Body of pancreas (tissue), 4 donors: ENCODE measurements at regions of chr17 and their contacts with region 1.

Region 1: DNA sequence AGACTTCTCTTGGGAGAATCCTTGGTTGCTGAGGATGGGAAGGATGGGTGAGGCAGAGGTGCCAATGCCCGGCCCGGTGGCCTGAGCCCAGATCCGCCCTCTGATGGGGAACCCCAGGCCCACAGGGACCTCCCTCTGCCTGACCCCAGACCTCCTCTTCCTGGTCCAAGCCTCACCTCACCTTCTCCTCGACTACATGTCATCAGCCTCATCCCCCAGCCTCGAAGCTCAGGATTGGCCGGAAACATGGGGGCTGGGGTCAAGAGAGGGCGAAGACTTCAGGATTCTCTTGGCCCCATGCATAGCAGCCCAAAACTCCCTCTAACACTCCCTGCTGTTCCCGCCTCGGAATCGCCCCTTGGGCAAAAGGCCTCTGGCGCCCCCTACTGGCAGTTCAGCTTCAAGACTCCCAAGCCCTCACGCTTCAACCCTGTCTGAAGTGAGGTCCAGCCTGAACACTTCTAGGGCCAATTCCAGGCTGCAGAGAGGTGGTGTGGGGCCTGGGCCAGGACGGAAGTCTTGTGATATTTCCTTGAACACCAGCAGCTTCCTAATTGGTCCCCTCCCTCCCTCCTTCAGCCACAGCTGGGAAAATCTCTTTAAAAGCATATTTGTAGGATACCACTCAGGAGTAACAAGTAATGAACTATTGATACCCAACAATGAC is 47.2 kb downstream of the ARHGAP27 start:
- DNase-seq: peak; percentile 88 to 92 (median 90)
- ATAC-seq: peak; percentile 89
- H3K4me3 ChIP-seq: no peak overlapping the region
- H3K27ac ChIP-seq: peak overlapping the region in 3 of 4 donors; percentile 25 to 50 (median 46)
- H3K4me1 ChIP-seq: peaks cover 28% of the 10 kb centered on the region
- H3K27me3 ChIP-seq: no peaks in the 10 kb centered on the region
- CTCF ChIP-seq: peak; percentile 95 to 98 (median 98)
- POLR2A ChIP-seq: no peak

Region 2: GRCh38 chr17:45221066-45221996 is 164.1 kb before region 1 on chr17 and contains the start of gene FMNL1:
- intact Hi-C with region 1: loop called (anchors 5 kb)
- DNase-seq: peak in 2 of 4 donors; percentile 40 to 59
- ATAC-seq: peak; percentile 26
- H3K4me3 ChIP-seq: peak within 1 kb of the TSS in 1 of 2 donors; percentile 45
- H3K27ac ChIP-seq: peak within 1 kb of the TSS in 1 of 4 donors; percentile 51
- H3K4me1 ChIP-seq: peaks cover 17% of the 10 kb centered on the region
- H3K27me3 ChIP-seq: peaks cover 0 to 5% of the 10 kb centered on the region in 2 donors
- CTCF ChIP-seq: no peak
- POLR2A ChIP-seq: no peak
- total RNA-seq, gene FMNL1: 4.0 to 5.2 TPM

Region 3: GRCh38 chr17:45277992-45278391 is 107.5 kb before region 1 on chr17:
- intact Hi-C with region 1: loop called (anchors 2 kb)
- DNase-seq: peak; percentile 51 to 68 (median 60)
- ATAC-seq: peak; percentile 72
- H3K4me3 ChIP-seq: no peak overlapping the region
- H3K27ac ChIP-seq: peak overlapping the region; percentile 70 to 93 (median 86)
- H3K4me1 ChIP-seq: peaks cover 27% of the 10 kb centered on the region
- H3K27me3 ChIP-seq: no peaks in the 10 kb centered on the region
- CTCF ChIP-seq: peak in 1 of 7 experiments; percentile 4
- POLR2A ChIP-seq: peak in 1 of 3 donors; percentile 4

Region 4: DNA sequence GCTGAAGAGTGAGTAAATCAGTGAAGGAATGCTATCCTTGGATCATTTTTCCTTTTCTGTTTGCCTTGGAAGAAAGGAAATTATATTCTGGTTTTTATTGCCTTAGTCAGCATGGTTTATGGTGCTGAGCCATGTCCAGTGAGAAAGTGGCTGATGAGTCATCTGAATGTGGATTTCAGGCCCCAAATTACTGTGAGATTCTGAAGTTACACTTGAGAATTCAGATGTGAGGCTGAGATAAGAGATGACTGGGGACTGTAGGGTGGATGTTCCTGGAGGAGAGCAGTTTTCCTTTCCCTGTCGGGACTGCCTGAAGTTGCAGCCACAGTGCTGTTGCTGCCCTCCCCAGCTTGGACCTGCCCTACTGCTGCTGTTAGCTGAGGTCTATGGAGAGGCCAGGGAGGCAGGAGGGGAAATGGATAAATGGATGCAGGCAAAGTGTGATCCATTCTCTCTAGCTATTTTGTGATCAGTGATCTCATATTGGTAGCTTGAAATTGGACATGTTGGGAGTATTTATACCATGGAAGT is 64.5 kb before region 1 on chr17:
- intact Hi-C with region 1: no loop called
- DNase-seq: no peak
- ATAC-seq: no peak
- H3K4me3 ChIP-seq: no peak overlapping the region
- H3K27ac ChIP-seq: peak overlapping the region in 2 of 4 donors; percentile 8 to 13
- H3K4me1 ChIP-seq: peaks cover 10% of the 10 kb centered on the region
- H3K27me3 ChIP-seq: no peaks in the 10 kb centered on the region
- CTCF ChIP-seq: no peak
- POLR2A ChIP-seq: no peak

Region 5: DNA sequence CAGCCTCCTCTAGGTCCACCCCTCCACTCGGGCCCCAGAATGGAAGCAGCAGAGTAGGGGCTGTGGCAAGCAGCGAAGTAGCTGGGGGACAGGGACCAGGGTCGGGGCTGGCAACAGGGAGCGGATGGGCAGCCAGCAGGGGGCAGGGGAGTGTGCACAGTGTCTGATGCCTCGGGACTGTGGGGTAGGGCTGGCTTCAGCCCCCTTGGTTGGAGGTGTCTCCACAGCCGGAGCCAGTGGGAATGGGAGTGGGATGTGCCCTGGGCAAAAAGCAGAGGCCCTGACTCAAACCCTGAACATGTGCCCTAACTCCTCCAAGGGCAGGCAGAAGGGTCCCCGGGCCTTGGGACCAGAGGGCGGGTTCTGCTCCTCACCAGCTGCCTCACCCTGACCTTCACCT is 65.7 kb after region 1 on chr17:
- intact Hi-C with region 1: no loop called
- DNase-seq: no peak
- ATAC-seq: no peak
- H3K4me3 ChIP-seq: no peak overlapping the region
- H3K27ac ChIP-seq: no peak overlapping the region
- H3K4me1 ChIP-seq: peaks cover 7% of the 10 kb centered on the region
- H3K27me3 ChIP-seq: no peaks in the 10 kb centered on the region
- CTCF ChIP-seq: no peak
- POLR2A ChIP-seq: no peak

Region 6: GRCh38 chr17:45823598-45823997 is 438.1 kb after region 1 on chr17:
- intact Hi-C with region 1: no loop called
- DNase-seq: no peak
- ATAC-seq: no peak
- H3K4me3 ChIP-seq: no peak overlapping the region
- H3K27ac ChIP-seq: no peak overlapping the region
- H3K4me1 ChIP-seq: no peaks in the 10 kb centered on the region
- H3K27me3 ChIP-seq: no peaks in the 10 kb centered on the region
- CTCF ChIP-seq: no peak
- POLR2A ChIP-seq: no peak